Sciatic nerve (tissue), 2 donors: ENCODE measurements at regions of chr5 and their contacts with region 1.

Region 1: DNA sequence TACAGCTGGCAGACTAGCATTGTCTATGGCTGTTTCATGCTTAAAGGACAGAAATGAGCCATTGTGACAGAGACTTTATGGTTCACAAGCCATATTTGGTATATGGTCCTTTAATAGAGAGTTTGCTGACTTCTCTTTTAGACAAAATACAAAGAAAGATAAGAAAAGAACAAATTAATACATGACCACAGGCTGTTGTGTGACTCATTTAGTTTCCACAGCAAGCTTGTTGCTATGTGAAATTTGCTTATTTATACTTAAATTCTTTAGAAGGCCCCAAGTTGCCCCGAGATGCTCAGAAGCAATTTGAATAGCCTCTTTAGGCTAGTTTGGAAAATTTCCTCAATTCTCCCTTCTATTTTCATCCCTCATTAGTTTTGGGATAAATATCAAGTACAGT is 315.3 kb upstream of the RPS23 start:
- DNase-seq: no peak
- ATAC-seq: no peak

Region 2: GRCh38 chr5:82480331-82480730 is 113.2 kb before region 1 on chr5:
- intact Hi-C with region 1: no loop called
- DNase-seq: no peak
- ATAC-seq: no peak

Region 3: DNA sequence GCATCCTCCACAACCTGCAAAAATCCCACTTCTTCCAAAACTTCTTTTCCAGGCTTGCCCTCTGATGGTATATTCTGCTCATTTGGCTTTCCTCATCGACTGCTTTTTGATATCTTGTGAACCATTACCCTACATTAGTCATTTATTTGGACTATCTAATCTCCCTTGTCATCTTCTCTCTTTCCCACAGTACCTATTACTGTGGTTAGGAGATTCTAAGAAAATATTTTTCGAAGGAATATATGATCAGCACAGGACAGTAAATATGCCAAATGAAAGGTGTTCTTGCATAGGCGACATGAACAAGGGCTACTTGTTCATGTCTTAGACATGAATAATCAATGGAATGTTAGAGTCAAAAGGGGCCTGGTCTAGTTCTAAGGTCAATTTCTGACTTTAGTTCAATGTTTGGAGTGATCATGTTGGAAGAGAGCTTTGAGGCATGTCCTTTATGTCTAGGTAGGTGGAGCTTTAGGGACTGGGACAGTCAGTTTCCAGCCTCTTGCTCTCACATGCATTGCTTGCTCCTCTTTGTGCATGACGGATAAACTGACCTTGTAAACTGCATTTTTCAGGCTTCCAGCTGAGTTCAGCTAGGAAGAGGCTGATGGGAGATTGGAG is 71.9 kb before region 1 on chr5:
- intact Hi-C with region 1: loop called (anchors 2 kb)
- DNase-seq: no peak
- ATAC-seq: no peak

Region 4: GRCh38 chr5:82564963-82565362 is 28.5 kb before region 1 on chr5:
- intact Hi-C with region 1: loop called (anchors 1 kb)
- DNase-seq: no peak
- ATAC-seq: no peak

Region 5: GRCh38 chr5:82873452-82873851 is 280.0 kb after region 1 on chr5:
- intact Hi-C with region 1: no loop called
- DNase-seq: no peak
- ATAC-seq: no peak

Region 6: GRCh38 chr5:83777856-83778255 is 1184.4 kb after region 1 on chr5:
- intact Hi-C with region 1: no loop called
- DNase-seq: no peak
- ATAC-seq: no peak